ENCODE measurements at regions of chr1 and their contacts with region 1.

Region 1: DNA sequence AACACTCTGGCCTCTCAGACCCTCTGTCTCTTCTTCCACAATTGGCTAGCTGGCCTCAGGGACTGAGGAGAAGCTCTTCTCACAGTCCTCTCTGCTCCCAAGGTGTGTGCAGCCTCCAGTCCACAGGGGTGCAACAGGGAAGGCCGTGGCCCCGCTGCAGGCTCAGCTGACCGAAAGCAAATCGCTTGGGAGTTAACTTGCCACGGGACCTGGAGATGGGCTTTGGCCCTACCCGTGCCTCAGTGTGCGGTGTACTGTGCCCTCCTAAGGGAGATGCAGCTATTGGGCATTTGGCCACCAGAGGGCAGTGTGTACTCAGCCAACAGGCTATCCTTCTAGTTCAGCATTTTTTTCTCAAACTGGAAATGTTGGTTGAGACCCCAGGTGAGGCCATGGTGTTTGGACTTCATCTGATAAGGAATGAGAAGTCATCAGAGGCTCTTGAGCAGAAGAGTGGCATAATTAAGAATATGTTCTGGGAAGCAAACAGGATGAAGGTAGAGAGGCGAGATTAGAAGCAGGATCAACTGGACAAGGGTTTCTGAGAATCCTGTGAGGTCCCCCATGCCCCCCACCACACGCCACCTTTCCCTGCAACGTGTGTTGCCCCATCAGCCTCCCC is 42.5 kb upstream of the TMEM125 start:
- DNase-seq: peak; percentile 67
- H3K4me3 Mint-ChIP-seq: no peak overlapping the region
- H3K27ac Mint-ChIP-seq: no peak overlapping the region
- H3K4me1 Mint-ChIP-seq: no peaks in the 10 kb centered on the region
- H3K27me3 Mint-ChIP-seq: peaks cover 6% of the 10 kb centered on the region

Region 2: DNA sequence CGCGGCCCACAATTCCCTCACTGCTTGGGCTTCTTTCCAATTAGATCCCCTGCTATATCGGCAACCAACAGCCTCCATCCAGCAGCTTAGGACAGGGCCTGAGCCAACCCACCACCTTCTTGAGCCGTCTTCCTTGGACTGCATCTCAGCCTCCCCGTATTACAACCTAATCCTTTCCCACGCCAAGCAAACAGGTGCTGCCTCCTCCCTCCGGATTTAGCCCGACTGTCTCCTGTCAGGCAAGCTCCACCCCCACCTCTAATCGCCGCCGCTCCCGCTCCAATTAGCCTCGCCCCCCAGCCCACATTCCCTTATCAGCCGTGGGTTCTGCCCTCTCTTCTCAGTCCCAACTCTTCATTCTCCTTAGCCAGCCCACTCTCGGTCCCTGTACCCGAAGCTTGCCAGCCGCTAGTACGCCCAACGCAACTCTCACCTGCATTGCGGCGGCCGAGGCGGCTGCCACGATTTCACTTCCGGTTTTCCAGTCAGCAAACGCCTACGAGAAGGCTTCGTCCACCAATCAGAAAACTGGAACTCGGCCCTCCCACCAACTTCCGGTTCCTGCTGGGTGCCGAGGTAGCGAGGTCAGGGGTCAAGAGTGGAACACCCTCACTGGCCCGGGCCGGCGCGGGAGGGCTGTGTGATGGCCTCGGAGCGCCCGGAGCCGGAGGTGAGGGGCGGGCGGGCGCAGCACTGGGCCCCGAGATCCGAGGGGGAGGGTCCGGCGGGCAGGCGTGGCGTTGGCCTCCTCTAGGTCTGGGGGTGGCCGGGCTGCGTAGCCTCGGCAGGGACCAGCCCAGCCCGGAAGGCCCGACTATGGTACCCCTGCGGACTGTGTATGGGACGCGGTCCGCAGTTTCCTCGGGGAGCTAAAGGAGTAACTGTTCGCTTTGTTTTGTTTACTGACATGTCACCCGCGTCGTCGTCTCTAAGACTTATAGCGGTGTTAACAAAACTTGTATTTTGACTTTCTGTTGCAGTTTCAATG is 162.4 kb after region 1 on chr1 and contains the starts of genes MED8 and SZT2:
- intact Hi-C with region 1: loop called (anchors 1 kb)
- DNase-seq: peak; percentile 93
- H3K4me3 Mint-ChIP-seq: peak within 1 kb of the TSS; percentile 99
- H3K27ac Mint-ChIP-seq: peak within 1 kb of the TSS; percentile 92
- H3K4me1 Mint-ChIP-seq: peaks cover 40% of the 10 kb centered on the region
- H3K27me3 Mint-ChIP-seq: no peaks in the 10 kb centered on the region
- total RNA-seq, gene MED8: 43.0 and 48.5 TPM in 2 replicates
- total RNA-seq, gene SZT2: 59.2 and 64.5 TPM in 2 replicates

Region 3: DNA sequence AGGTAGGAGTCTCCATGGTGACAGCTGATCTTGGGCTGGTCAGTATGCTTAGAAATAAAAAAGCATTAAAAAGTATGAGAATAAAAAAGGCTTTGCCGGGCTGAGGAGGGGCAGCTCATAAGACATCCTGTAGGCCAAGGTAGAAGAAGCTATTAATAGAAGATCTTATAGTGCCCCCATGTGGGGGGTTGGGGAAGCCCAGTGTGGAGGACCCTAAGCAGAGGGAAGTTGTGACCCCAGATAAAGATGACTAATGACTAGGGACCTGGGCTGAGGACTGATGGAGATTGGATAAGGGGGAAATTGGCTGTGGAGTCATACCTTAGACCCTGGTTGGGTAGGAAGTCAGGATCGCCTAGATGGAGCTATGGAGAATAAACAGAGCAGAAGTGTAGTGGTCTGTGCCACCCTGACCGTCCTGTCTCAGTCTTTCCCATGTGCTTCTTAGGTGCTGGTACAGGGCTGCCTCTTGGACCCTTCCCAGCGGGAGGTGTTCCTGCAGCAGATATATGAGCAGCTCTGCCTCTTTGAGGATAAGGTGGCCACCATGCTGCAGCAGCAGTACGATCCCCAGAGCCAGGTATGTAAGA is 187.5 kb after region 1 on chr1:
- intact Hi-C with region 1: loop called (anchors 1 kb)
- DNase-seq: peak; percentile 22
- H3K4me3 Mint-ChIP-seq: no peak overlapping the region
- H3K27ac Mint-ChIP-seq: peak overlapping the region; percentile 10
- H3K4me1 Mint-ChIP-seq: no peaks in the 10 kb centered on the region
- H3K27me3 Mint-ChIP-seq: no peaks in the 10 kb centered on the region

Region 4: GRCh38 chr1:43509723-43510375 is 282.6 kb after region 1 on chr1:
- intact Hi-C with region 1: loop called (anchors 10 kb)
- DNase-seq: no peak
- H3K4me3 Mint-ChIP-seq: no peak overlapping the region
- H3K27ac Mint-ChIP-seq: no peak overlapping the region
- H3K4me1 Mint-ChIP-seq: peaks cover 16% of the 10 kb centered on the region
- H3K27me3 Mint-ChIP-seq: peaks cover 4% of the 10 kb centered on the region

Region 5: GRCh38 chr1:43934101-43934985 is 707.1 kb after region 1 on chr1:
- intact Hi-C with region 1: loop called (anchors 2 kb)
- DNase-seq: peak; percentile 32
- H3K4me3 Mint-ChIP-seq: no peak overlapping the region
- H3K27ac Mint-ChIP-seq: no peak overlapping the region
- H3K4me1 Mint-ChIP-seq: peaks cover 8% of the 10 kb centered on the region
- H3K27me3 Mint-ChIP-seq: peaks cover 14% of the 10 kb centered on the region